ENCODE measurements at regions of chr20 and their contacts with region 1.

Region 1: DNA sequence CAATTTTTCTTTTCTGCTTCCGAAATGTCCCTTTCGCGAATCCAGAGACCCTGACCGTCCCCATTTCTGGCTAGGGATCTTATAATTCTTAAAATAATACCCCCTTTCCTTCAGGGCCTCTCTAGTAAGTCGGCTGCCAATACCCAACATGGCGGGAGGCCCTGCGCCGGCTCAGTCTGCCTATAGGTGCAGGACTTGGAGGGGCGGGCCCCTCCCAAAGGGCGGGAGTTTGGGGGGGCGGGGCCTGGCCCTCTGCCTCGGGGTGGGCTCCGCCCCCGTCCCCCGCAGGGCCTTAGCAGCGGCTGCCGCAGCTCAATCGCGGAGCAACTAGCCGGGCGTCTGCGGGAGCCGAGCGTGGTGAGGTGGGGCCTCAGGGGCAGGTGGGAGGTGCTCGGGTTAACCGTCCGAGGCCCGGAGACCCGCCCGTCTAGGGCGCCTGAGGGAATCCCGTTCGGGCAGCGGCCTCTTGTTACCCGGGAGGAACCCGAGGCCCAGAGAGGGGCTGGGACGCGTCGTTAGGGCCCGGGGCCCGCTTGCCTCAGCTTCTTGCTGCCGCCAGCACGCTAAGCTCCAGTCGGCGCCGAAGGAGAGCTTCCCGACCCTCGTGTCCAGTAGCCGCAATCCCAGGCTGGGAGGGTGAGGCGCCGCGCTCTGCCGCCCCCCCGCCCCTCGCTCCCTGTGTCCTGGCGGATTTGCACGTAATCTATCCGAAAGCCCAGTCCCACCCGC is at the start of gene CEP250:
- DNase-seq: peak; percentile 98
- ATAC-seq: peak; percentile 97
- H3K4me3 Mint-ChIP-seq: peak within 1 kb of the TSS; percentile 79
- H3K27ac Mint-ChIP-seq: peak within 1 kb of the TSS; percentile 97
- H3K4me1 Mint-ChIP-seq: peaks cover 27% of the 10 kb centered on the region
- H3K27me3 Mint-ChIP-seq: no peaks in the 10 kb centered on the region
- total RNA-seq, gene CEP250: 50.4 to 60.2 TPM

Region 2: DNA sequence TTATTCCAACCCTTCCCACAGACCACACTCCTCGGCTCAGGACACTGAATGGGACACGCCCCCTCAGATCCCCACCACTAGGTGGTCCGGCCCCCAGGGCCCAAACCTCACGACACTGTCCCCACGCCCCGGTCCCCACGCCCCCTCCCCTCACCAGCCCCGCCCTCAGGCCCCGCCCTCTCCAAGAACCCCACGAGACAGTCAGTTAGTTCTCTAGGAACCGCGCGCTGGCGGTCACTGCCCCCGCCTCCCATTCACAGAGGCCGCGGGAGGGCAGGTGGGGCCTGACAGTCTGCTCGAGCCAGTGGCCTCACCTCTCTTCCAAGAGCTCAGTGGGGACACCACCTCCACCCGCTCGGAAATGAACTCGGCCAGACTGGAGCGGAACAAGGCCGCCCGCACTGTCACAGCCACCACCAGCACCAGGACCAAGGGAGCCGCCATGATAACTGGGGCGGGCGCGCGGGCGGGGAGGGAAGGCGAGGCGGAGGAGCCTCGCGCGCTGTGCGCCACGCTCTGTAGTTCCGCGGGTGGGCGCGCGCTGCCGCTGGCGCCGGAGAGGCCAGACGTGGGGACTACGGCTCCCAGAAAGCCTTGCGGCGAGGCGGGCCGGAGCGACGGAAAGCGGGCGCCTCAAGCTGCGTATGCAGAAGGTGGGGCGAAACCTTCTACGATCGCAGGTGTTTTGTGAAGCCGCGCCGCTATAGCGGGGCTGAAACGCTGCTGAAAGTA is 778.2 kb before region 1 on chr20 and contains the start of gene PIGU:
- CTCF ChIA-PET with region 1: no interaction called
- POLR2A ChIA-PET with region 1: no interaction called
- intact Hi-C with region 1: loop called in 1 of 2 experiments (anchors 2 kb)
- DNase-seq: peak; percentile 98
- ATAC-seq: peak; percentile 97
- H3K4me3 Mint-ChIP-seq: peak within 1 kb of the TSS; percentile 97
- H3K27ac Mint-ChIP-seq: peak within 1 kb of the TSS; percentile 96
- H3K4me1 Mint-ChIP-seq: peaks cover 34% of the 10 kb centered on the region
- H3K27me3 Mint-ChIP-seq: no peaks in the 10 kb centered on the region
- total RNA-seq, gene PIGU: 21.1 to 28.2 TPM

Region 3: GRCh38 chr20:34988191-34988540 is 466.9 kb before region 1 on chr20:
- CTCF ChIA-PET with region 1: no interaction called
- POLR2A ChIA-PET with region 1: no interaction called
- intact Hi-C with region 1: no loop called
- DNase-seq: no peak
- ATAC-seq: no peak
- H3K4me3 Mint-ChIP-seq: no peak overlapping the region
- H3K27ac Mint-ChIP-seq: no peak overlapping the region
- H3K4me1 Mint-ChIP-seq: no peaks in the 10 kb centered on the region
- H3K27me3 Mint-ChIP-seq: peaks cover 7% of the 10 kb centered on the region

Region 4: DNA sequence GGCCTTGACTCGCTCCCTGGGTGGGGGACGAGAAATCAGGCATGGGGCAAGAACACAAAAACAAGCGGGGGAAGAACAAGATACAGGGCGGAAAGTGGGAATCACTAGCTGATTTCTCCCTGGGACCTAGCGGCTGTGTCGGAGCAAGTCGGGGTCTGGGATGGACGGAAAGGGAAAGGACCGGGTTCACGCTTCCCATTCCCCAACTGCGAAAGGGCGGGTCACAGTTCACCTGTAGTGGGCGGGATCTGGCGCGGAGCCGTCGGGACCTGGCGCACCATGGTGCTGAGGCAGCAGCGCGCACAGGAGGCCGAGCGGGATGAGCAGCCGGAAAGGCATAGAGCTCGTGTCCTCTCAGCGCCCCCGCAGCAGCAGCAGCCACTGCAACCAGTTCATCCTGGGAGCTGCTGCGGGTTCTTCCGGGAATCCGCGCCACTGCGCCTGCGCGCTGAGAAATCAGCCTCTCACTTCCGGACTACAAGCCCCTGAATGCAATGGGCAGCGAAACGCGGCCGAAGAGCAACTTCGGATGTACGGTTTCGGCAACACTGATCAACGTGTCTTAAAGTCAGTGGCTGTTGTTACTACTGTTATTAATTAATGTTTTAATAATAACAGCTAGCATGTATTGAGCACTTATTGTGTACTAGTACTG is 308.0 kb before region 1 on chr20 and contains the start of gene EDEM2:
- CTCF ChIA-PET with region 1: no interaction called
- POLR2A ChIA-PET with region 1: no interaction called
- intact Hi-C with region 1: loop called in 1 of 2 experiments (anchors 2 kb)
- DNase-seq: peak; percentile 97
- ATAC-seq: peak; percentile 92
- H3K4me3 Mint-ChIP-seq: peak within 1 kb of the TSS; percentile 97
- H3K27ac Mint-ChIP-seq: peak within 1 kb of the TSS; percentile 95
- H3K4me1 Mint-ChIP-seq: peaks cover 29% of the 10 kb centered on the region
- H3K27me3 Mint-ChIP-seq: no peaks in the 10 kb centered on the region
- total RNA-seq, gene EDEM2: 16.5 to 18.2 TPM

Region 5: GRCh38 chr20:35410613-35411012 is 44.4 kb before region 1 on chr20:
- CTCF ChIA-PET with region 1: no interaction called
- POLR2A ChIA-PET with region 1: interaction called, 3 read pairs
- intact Hi-C with region 1: loop called (anchors 1 kb)
- DNase-seq: no peak
- ATAC-seq: no peak
- H3K4me3 Mint-ChIP-seq: peak overlapping the region; percentile 91
- H3K27ac Mint-ChIP-seq: peak overlapping the region; percentile 100
- H3K4me1 Mint-ChIP-seq: peaks cover 21% of the 10 kb centered on the region
- H3K27me3 Mint-ChIP-seq: no peaks in the 10 kb centered on the region

Region 6: DNA sequence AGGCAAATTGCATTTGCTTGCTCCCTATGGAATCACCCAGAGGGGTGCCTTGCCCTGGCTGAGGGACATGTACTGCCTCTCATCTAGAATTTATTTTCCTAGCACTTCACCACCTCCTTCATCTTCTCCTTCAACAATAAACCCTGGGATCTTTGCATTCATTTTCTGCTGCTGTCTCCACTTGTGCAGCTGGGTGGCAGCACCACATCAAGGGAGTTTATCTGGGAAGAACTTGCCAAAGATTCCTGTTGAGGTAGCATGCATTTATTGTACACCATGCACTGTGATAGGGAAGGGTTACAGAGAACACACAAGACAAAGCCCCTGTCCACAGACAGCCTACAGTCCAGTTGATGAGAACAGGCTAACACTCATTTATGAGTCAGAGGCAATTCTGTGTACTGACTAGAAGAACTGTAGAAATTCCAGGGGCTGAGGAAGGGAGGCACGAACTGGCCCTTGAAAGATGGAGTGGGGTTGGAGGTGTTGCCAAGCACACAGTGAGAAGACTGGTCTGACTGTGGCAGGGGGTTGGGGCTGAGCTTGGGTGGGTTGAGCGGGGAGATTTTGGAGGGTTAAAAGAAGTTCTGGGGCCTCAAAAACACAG is 56.9 kb after region 1 on chr20:
- CTCF ChIA-PET with region 1: no interaction called
- POLR2A ChIA-PET with region 1: no interaction called
- intact Hi-C with region 1: no loop called
- DNase-seq: no peak
- ATAC-seq: no peak
- H3K4me3 Mint-ChIP-seq: no peak overlapping the region
- H3K27ac Mint-ChIP-seq: peak overlapping the region; percentile 7
- H3K4me1 Mint-ChIP-seq: peaks cover 3% of the 10 kb centered on the region
- H3K27me3 Mint-ChIP-seq: no peaks in the 10 kb centered on the region

Region 7: GRCh38 chr20:35619196-35620095 is 164.4 kb after region 1 on chr20:
- CTCF ChIA-PET with region 1: interaction called, 4 read pairs
- POLR2A ChIA-PET with region 1: interaction called, 10 read pairs
- intact Hi-C with region 1: loop called (anchors 1 to 5 kb)
- DNase-seq: peak; percentile 93
- ATAC-seq: peak; percentile 51
- H3K4me3 Mint-ChIP-seq: peak overlapping the region; percentile 83
- H3K27ac Mint-ChIP-seq: peak overlapping the region; percentile 92
- H3K4me1 Mint-ChIP-seq: peaks cover 48% of the 10 kb centered on the region
- H3K27me3 Mint-ChIP-seq: peaks cover 2% of the 10 kb centered on the region

Region 8: GRCh38 chr20:35657271-35657670 is 202.2 kb after region 1 on chr20:
- CTCF ChIA-PET with region 1: no interaction called
- POLR2A ChIA-PET with region 1: no interaction called
- intact Hi-C with region 1: no loop called
- DNase-seq: no peak
- ATAC-seq: no peak
- H3K4me3 Mint-ChIP-seq: peak overlapping the region; percentile 24
- H3K27ac Mint-ChIP-seq: peak overlapping the region; percentile 89
- H3K4me1 Mint-ChIP-seq: peaks cover 59% of the 10 kb centered on the region
- H3K27me3 Mint-ChIP-seq: no peaks in the 10 kb centered on the region

Region 9: DNA sequence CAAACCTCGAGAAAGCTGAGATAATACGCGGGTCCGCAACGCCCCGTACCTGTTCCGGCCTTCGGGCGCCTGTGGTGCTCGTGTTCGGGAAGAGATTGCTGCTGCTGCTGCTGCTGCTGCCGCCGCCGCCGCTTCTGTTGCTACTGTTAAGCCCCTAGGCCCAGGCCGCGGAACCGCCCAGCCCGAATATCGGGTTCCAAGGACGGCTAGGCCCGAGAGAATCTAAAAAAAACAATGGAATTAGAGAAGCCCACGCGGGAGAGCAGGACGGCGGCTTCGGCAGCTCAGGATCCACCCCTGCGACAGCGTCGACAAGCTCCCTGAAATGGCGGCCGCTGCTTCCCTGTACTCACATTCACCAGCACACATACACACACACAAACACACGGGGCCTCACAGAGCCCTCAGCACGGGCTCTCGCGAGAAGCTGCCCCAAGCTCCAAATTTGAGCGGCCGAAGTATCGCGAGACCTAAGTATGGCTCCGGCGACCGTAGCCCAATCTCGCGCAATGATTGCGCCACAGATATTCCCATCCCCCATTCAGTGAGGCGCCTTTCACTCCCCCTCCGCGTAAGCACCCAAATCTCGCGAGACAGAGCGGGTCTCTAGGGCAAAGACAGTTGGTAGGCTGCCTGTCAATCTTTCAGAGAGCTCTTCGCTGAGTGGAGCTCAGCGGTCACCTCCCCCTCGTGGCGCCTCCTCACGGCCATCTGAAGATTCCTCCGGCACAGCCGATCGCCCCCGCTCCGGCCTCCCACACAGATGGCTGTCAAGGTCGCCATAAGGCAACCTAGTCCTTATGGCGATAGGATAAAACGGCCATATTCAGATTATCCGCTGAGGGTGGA is 287.1 kb after region 1 on chr20 and contains the start of gene RBM39:
- CTCF ChIA-PET with region 1: no interaction called
- POLR2A ChIA-PET with region 1: interaction called, 6 read pairs
- intact Hi-C with region 1: loop called in 1 of 2 experiments (anchors 1 kb)
- DNase-seq: peak; percentile 100
- ATAC-seq: peak; percentile 88
- H3K4me3 Mint-ChIP-seq: peak within 1 kb of the TSS; percentile 90
- H3K27ac Mint-ChIP-seq: peak within 1 kb of the TSS; percentile 100
- H3K4me1 Mint-ChIP-seq: peaks cover 45% of the 10 kb centered on the region
- H3K27me3 Mint-ChIP-seq: no peaks in the 10 kb centered on the region
- total RNA-seq, gene RBM39: 303 to 356 TPM

Region 10: DNA sequence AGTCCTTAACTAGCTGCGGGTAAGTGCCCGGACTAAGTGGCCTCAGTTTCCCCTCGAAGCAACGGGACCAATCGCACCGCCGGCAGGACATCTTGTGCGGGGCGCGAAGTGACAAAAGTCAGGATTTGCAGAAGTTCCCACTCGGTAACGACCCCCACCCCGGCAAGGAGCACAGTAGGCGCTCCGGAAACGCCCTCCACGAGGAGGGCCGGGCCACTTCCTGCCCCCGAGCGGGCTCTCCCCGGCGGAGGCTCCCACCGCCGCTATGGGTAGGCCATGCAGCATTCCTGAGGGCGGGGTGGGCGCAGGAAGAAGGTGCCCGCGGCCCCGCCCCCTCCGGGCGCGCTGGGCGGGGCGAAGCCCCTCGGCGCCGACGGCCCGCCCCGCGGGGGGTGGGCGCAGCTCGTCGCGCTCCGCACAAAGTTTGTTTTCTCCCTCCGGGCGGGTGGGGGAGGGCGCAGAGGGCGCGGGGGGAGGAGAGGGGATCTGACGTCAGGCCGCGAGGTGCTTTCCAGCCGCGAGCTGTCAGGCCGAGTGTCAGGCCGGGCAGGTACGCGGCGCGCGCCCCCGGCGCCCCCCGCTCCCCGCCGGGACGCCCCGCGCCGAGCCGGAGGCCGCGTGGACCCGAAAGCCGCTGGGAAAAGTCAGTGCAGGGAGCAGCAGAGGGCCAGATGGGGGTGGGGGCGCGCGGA is 1118.2 kb after region 1 on chr20 and contains the start of gene TGIF2:
- CTCF ChIA-PET with region 1: no interaction called
- POLR2A ChIA-PET with region 1: no interaction called
- intact Hi-C with region 1: loop called in 1 of 2 experiments (anchors 10 kb)
- DNase-seq: peak; percentile 95
- ATAC-seq: peak; percentile 75
- H3K4me3 Mint-ChIP-seq: peak within 1 kb of the TSS; percentile 88
- H3K27ac Mint-ChIP-seq: peak within 1 kb of the TSS; percentile 93
- H3K4me1 Mint-ChIP-seq: peaks cover 35% of the 10 kb centered on the region
- H3K27me3 Mint-ChIP-seq: no peaks in the 10 kb centered on the region
- total RNA-seq, gene TGIF2: 44.9 to 48.7 TPM